Endothelial cell of umbilical vein (primary cell): ENCODE measurements at regions of chr16 and their contacts with region 1.

Region 1: DNA sequence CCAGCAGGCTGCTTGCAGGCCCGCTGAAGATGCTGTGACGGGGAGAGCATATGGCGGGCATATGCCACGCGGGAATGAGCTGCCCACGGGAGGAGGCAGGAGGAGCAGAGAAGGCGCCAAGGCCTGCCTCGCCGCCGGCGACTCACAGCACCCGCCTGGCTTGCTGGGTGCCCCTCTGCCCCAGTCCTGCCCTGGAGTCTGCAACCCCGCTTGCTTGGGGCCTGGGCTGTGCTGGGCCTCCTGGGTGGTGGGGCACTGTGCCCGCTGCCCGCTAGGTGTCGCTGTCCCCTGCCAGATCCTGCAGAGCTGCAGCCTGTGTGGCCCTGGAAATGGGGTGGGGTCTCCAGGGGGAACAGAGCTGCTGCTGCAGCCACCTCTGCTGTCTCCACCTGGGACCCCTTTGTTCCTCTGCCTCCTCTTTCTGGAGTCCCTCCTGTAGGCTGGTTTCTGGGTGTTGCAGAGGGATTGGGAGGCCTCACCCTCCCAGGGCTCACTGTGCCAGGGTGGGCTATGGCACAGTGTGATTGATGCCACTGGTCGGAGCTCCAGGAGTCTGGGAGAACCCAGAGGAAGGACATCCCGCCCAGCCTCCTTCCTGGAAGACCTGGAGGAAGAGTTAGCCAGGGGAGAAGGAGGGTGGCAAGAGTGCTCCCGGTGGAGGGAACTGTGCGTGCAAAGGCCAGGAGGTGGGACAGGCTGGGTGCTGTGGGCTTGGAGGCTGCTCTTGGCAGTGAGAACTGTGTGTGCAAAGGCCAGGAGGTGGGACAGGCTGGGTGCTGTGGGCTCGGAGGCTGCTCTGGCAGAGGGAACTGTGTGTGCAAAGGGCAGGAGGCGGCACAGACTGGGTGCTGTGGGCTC is 141.0 kb upstream of the CIBAR2 start:
- DNase-seq: peak; percentile 28
- H3K4me3 ChIP-seq: no peak overlapping the region
- H3K27ac ChIP-seq: no peak overlapping the region
- H3K4me1 ChIP-seq: no peaks in the 10 kb centered on the region
- H3K27me3 ChIP-seq: no peaks in the 10 kb centered on the region
- CTCF ChIP-seq: peak; percentile 92 to 97
- POLR2A ChIP-seq: no peak

Region 2: DNA sequence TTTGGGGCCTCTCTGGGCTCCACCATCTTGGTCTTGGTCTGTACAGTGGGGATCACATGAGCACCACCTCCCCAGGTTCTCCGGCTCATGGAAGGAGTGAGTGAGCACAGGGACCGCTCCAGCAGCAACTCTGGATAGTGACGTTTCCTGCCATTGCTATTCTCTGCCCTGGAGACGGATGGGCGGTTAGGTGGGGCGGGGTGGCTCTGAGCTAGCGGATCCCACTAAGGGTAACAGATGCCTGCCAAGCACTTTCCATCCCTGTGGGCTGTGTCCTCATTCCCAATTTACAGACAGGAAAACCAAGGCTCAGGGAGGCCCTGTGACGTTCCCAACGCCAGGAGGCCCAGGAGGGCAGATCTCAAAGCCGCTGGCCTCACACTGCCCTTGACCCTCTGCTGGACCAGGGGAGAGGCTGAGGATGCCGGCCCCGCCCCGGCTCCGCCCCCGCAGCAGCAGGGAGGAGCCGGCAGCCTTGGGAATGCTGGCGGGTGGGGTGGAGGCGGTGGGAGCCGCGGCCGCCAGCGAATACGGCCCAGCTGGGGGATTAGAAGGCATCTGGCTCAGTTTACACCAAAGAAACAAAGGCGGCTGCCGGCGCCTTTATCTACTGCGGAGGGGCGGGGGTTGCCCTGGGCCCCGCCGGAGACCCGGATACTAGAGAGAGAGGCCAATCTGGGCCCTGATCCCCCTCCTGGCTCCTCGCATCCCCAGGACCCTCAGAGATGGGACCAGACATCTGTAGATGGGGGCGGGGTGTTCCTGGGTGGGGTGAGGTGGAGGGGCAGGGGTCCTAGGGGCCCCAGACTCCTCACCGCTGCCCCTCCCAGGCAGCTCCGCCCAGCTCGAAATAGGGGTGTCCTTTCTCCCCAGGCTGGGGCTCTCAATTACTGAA is 18.8 kb before region 1 on chr16:
- CTCF ChIA-PET with region 1: interaction called, 15 read pairs
- POLR2A ChIA-PET with region 1: no interaction called
- dilution Hi-C with region 1: no loop called
- intact Hi-C with region 1: no loop called
- DNase-seq: peak; percentile 69
- H3K4me3 ChIP-seq: peak overlapping the region in 2 of 3 experiments; percentile 49 to 56
- H3K27ac ChIP-seq: peak overlapping the region; percentile 40
- H3K4me1 ChIP-seq: peaks cover 14% of the 10 kb centered on the region
- H3K27me3 ChIP-seq: no peaks in the 10 kb centered on the region
- CTCF ChIP-seq: no peak
- POLR2A ChIP-seq: no peak

Region 3: GRCh38 chr16:85354686-85355514 is 101.6 kb after region 1 on chr16:
- CTCF ChIA-PET with region 1: no interaction called
- POLR2A ChIA-PET with region 1: no interaction called
- dilution Hi-C with region 1: no loop called
- intact Hi-C with region 1: no loop called
- DNase-seq: no peak
- H3K4me3 ChIP-seq: no peak overlapping the region
- H3K27ac ChIP-seq: no peak overlapping the region
- H3K4me1 ChIP-seq: peaks cover 5% of the 10 kb centered on the region
- H3K27me3 ChIP-seq: no peaks in the 10 kb centered on the region
- CTCF ChIP-seq: no peak
- POLR2A ChIP-seq: no peak

Region 4: DNA sequence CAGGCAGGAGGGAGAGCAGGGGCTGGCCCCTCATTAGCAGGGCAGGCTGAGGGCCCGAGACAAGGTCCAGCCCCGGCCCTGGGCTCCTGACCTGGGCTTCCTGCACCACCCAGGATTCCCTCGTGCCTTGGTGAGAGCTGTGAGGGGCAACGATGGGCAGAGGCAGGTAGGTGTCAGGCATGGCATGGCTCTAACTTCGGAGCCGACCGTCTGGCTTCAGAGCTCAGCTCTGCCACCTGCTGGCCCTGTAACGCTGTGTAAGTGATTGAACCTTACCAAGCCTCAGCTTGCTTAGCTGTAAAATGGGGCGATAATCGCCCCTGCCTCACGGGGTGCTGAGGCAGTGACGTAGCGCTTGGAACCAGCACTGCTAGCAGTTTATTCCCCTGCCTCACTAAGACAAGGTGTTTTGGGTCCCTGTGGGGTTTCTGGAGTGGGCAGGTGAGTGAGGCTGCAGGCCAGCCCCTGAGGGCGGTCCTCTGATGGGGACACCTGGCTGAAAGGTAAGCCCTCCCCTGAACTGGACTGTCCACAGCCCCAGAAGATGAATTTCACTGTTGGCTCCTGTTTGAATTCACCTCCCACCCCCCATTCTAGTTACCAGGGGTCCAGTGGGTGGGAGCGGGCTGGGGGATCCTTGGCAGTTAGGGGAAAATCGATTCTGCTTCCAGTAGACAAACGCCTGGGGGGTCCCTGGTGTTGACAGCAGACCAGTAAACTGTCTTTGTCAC is 175.0 kb after region 1 on chr16:
- CTCF ChIA-PET with region 1: no interaction called
- POLR2A ChIA-PET with region 1: no interaction called
- dilution Hi-C with region 1: no loop called
- intact Hi-C with region 1: no loop called
- DNase-seq: peak; percentile 8
- H3K4me3 ChIP-seq: no peak overlapping the region
- H3K27ac ChIP-seq: no peak overlapping the region
- H3K4me1 ChIP-seq: no peaks in the 10 kb centered on the region
- H3K27me3 ChIP-seq: no peaks in the 10 kb centered on the region
- CTCF ChIP-seq: peak; percentile 39 to 65
- POLR2A ChIP-seq: no peak